ENCODE measurements at regions of chr19 and their contacts with region 1.

Region 1: DNA sequence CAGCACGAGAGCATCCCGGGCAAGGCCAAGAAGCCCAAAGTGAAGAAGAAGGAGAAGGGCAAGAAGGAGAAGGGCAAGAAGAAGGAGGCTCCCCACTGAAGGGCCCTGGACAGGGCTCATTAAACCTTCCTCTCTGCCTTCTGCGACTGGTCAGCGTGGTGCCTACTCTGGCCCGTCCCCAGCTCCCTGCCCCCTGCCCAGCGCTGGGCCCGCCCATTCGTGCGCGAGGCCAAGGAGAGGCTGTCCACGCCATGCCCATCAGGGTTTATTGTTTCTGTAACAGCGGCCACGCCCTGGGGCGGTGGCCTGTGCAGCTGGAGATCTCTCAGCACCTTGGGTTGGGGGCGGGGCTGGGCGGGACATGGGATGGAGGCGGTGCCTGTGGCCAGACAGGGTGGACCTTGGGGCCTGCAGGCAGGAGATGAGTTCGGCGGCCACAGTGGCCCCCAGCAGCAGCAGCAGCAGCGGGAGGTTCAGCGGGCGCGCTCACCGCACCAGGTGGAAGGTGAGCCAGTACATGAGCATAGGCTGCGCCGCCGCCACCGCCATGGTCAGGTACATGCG is 897 bp downstream of the C19orf33 start:
- DNase-seq: peak; percentile 90
- ATAC-seq: peak; percentile 86
- H3K4me3 Mint-ChIP-seq: peak overlapping the region; percentile 74
- H3K27ac Mint-ChIP-seq: peak overlapping the region; percentile 88
- H3K4me1 Mint-ChIP-seq: peaks cover 16% of the 10 kb centered on the region
- H3K27me3 Mint-ChIP-seq: peaks cover 4% of the 10 kb centered on the region
- CTCF ChIP-seq: no peak

Region 2: DNA sequence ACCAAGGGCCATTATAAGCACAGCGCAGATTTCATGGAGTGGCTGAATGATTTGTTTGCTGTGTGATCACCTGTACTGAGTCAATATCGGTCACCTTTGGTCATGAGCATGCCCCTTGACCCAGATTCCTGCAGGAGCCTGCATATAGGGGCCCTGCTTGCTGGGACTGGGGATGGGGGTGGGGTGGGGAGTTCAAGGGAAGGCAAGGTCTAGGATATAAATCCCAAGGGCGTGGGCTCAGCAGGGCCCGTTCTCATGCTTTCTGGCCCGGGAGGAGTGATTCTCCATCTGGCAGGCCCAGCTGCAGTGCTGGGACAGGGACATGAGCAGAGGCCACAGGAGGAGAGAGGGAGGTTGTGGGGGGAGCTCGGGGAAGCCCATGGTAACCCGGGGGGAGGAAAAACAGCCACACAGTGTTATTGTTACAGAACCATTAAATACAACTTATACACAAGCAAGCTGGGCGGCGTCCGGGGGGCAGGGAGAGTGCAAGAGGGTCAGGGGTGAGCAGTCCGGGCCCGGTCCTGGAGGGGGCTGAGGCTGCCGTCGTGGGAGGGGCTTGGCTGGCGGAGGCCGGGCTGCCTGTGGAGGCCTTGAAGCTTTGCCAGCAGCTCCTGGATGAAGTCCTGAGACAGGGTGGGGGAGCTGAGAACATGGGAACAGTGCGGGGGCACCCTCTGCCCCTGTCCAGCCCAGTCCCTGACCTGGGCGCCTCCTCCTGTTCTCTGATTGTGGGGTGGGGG is 54.0 kb before region 1 on chr19:
- CTCF ChIA-PET with region 1: interaction called, 10 read pairs
- POLR2A ChIA-PET with region 1: interaction called, 8 read pairs
- DNase-seq: peak; percentile 38
- ATAC-seq: peak; percentile 45
- H3K4me3 Mint-ChIP-seq: peak overlapping the region; percentile 63
- H3K27ac Mint-ChIP-seq: peak overlapping the region; percentile 75
- H3K4me1 Mint-ChIP-seq: peaks cover 46% of the 10 kb centered on the region
- H3K27me3 Mint-ChIP-seq: peaks cover 8% of the 10 kb centered on the region
- CTCF ChIP-seq: no peak

Region 3: DNA sequence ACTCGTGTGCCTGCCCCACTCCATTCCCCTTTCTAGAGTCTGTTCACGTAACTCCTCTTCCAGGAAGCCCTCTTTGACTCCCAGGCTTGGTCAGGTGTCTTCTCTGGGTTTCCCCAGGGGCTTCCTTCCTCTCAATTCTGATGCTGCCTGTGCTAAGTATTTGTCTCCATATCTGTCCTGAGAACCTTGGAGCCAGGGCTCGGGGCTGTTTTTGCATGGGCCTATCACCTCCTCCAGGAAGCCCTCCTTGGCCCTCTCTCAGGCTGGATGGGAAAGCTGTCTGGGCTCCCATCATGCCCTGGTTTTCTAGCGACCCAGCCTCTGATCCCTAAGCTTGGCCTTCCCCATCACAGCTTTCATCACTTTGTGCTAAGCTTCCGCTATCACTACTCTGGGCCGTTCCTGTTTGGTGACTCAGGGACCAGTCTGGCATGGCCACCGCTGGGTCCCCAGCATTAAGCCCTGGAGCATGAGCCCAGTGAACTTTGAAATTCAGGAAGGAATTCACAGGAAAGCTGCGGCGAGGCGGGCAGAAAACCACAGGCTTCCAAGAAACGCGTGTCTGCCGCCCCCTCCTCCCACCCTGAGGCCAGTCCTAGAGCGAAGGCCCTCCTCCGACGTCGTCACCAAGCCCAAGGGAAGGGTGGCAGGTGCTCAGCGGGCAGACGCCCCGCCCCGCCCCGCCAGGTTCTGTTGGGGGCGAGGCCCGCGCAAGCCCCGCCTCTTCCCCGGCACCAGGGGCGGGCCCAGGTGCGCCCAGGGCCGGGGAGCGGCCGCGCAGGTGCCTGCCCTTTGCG is 41.1 kb before region 1 on chr19:
- CTCF ChIA-PET with region 1: no interaction called
- POLR2A ChIA-PET with region 1: interaction called, 17 read pairs
- DNase-seq: peak; percentile 97
- ATAC-seq: peak; percentile 89
- H3K4me3 Mint-ChIP-seq: peak overlapping the region; percentile 63
- H3K27ac Mint-ChIP-seq: peak overlapping the region; percentile 97
- H3K4me1 Mint-ChIP-seq: peaks cover 51% of the 10 kb centered on the region
- H3K27me3 Mint-ChIP-seq: no peaks in the 10 kb centered on the region
- CTCF ChIP-seq: no peak

Region 4: GRCh38 chr19:38277540-38277939 is 27.4 kb before region 1 on chr19:
- CTCF ChIA-PET with region 1: no interaction called
- POLR2A ChIA-PET with region 1: no interaction called
- DNase-seq: no peak
- ATAC-seq: no peak
- H3K4me3 Mint-ChIP-seq: no peak overlapping the region
- H3K27ac Mint-ChIP-seq: peak overlapping the region; percentile 32; the same call in 1 of the 2 replicates
- H3K4me1 Mint-ChIP-seq: peaks cover 10% of the 10 kb centered on the region; the same call in 1 of the 2 replicates
- H3K27me3 Mint-ChIP-seq: no peaks in the 10 kb centered on the region
- CTCF ChIP-seq: no peak

Region 5: DNA sequence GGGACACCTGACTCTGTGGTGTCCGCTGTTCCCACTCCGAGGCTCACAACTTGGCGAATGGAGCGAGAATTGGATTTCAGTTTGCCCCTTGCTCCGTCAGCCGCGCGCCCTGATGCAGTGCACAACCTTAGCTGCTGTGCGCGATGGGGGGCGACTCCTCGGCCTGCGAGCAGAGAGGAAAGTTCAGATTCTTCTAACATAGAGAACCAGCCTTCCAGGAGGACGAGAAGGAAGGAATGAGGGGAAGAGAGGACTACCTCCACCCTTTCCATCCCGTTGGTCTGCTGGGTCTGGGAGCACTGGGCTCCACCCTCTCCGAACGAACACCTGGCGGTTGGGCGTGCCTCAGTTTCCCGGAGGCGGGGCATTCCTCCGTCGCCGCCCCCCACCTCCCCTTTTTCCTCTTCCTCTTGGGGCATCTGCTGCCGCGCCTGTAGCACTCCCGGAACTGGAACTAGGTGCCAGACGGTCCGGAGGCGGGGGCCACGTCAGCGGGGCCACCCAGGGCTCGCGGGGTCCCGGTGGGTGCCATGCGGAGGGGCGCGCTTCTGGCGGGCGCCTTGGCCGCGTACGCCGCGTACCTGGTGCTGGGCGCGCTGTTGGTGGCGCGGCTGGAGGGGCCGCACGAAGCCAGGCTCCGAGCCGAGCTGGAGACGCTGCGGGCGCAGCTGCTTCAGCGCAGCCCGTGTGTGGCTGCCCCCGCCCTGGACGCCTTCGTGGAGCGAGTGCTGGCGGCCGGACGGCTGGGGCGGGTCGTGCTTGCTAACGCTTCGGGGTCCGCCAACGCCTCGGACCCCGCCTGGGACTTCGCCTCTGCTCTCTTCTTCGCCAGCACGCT is 14.7 kb after region 1 on chr19 and contains the start of gene KCNK6:
- CTCF ChIA-PET with region 1: interaction called, 12 read pairs
- POLR2A ChIA-PET with region 1: interaction called, 3 read pairs
- DNase-seq: peak; percentile 66
- ATAC-seq: peak; percentile 5
- H3K4me3 Mint-ChIP-seq: peak within 1 kb of the TSS; percentile 81
- H3K27ac Mint-ChIP-seq: no peak within 1 kb of the TSS
- H3K4me1 Mint-ChIP-seq: peaks cover 26% of the 10 kb centered on the region
- H3K27me3 Mint-ChIP-seq: peaks cover 54% of the 10 kb centered on the region
- CTCF ChIP-seq: no peak
- total RNA-seq, gene KCNK6: 12.9 to 18.3 TPM (median 13.2 TPM) in 3 replicates